Naive thymus-derived CD8-positive, alpha-beta T cell (primary cell): ENCODE measurements at regions of chr17 and their contacts with region 1.

Region 1: GRCh38 chr17:47188876-47189731 is at the start of gene CDC27:
- DNase-seq: peak; percentile 99 to 100 (median 100)
- ATAC-seq: peak; percentile 93 to 94
- H3K4me3 Mint-ChIP-seq: peak within 1 kb of the TSS; percentile 93 to 97 (median 95)
- H3K27ac Mint-ChIP-seq: peak within 1 kb of the TSS; percentile 86 to 97 (median 96)
- H3K4me1 Mint-ChIP-seq: peaks cover 25 to 55% (median 39%) of the 10 kb centered on the region in 4 donors
- H3K27me3 Mint-ChIP-seq: no peaks in the 10 kb centered on the region
- polyA plus RNA-seq, gene CDC27: 55.8 to 77.0 (median 71.5) TPM

Region 2: DNA sequence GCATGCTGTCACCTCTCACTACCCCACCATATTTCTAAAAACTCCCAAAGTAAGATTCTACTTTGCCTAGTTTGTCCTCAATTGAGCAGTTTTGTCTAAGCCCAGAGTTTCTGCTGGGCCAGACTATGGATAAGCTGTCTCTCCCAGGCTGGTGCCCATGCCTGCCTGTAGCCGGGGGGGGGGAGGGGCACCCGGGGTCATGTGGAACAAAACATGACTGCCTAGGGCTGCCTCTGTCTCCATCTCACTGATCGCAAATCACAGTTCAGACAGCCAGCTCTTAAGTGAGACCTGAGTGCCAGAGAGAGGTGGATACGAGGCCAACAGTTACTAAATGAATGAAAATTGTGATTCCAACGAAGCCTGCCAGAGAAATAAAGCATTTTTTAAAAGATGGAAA is 131.3 kb before region 1 on chr17:
- POLR2A ChIA-PET with region 1: no interaction called
- DNase-seq: no peak
- ATAC-seq: no peak
- H3K4me3 Mint-ChIP-seq: no peak overlapping the region
- H3K27ac Mint-ChIP-seq: no peak overlapping the region
- H3K4me1 Mint-ChIP-seq: peaks cover 0 to 10% (median 5%) of the 10 kb centered on the region in 4 donors
- H3K27me3 Mint-ChIP-seq: no peaks in the 10 kb centered on the region

Region 3: GRCh38 chr17:47119746-47120520 is 69.2 kb before region 1 on chr17:
- POLR2A ChIA-PET with region 1: no interaction called
- DNase-seq: no peak
- ATAC-seq: no peak
- H3K4me3 Mint-ChIP-seq: no peak overlapping the region
- H3K27ac Mint-ChIP-seq: peak overlapping the region in 6 of 10 donors; percentile 1 to 64 (median 35)
- H3K4me1 Mint-ChIP-seq: peaks cover 0 to 1% (median 0%) of the 10 kb centered on the region in 4 donors
- H3K27me3 Mint-ChIP-seq: no peaks in the 10 kb centered on the region

Region 4: GRCh38 chr17:47203984-47204721 is 15.0 kb after region 1 on chr17:
- POLR2A ChIA-PET with region 1: interaction called, 10 read pairs
- DNase-seq: peak in 7 of 10 donors; percentile 12 to 69 (median 41)
- ATAC-seq: peak; percentile 56 to 66
- H3K4me3 Mint-ChIP-seq: peak overlapping the region; percentile 63 to 88 (median 80)
- H3K27ac Mint-ChIP-seq: peak overlapping the region; percentile 83 to 98 (median 95)
- H3K4me1 Mint-ChIP-seq: peaks cover 31 to 76% (median 52%) of the 10 kb centered on the region in 4 donors
- H3K27me3 Mint-ChIP-seq: no peaks in the 10 kb centered on the region